GM12878 (cell line): ENCODE measurements at regions of chr1 and their contacts with region 1.

Region 1: GRCh38 chr1:92960395-92961130 is 699 bp downstream of the DIPK1A start:
- DNase-seq: peak; percentile 72
- ATAC-seq: peak; percentile 66
- H3K4me3 ChIP-seq: peak overlapping the region; percentile 97
- H3K27ac ChIP-seq: peak overlapping the region; percentile 91
- H3K4me1 ChIP-seq: peaks cover 40% of the 10 kb centered on the region
- H3K27me3 ChIP-seq: no peaks in the 10 kb centered on the region
- CTCF ChIP-seq: peak; percentile 65 to 91 (median 79)
- EP300 ChIP-seq: no peak
- POLR2A ChIP-seq: no peak
- RAD21 ChIP-seq: peak; percentile 94

Region 2: GRCh38 chr1:92619466-92620189 is 340.9 kb before region 1 on chr1:
- CTCF ChIA-PET with region 1: no interaction called
- POLR2A ChIA-PET with region 1: no interaction called
- RAD21 ChIA-PET with region 1: no interaction called
- SMC1A ChIA-PET with region 1: no interaction called
- in situ Hi-C with region 1: no loop called
- intact Hi-C with region 1: no loop called
- DNase-seq: no peak
- ATAC-seq: no peak
- H3K4me3 ChIP-seq: no peak overlapping the region
- H3K27ac ChIP-seq: no peak overlapping the region
- H3K4me1 ChIP-seq: no peaks in the 10 kb centered on the region
- H3K27me3 ChIP-seq: no peaks in the 10 kb centered on the region
- CTCF ChIP-seq: no peak
- EP300 ChIP-seq: no peak
- POLR2A ChIP-seq: no peak
- RAD21 ChIP-seq: no peak

Region 3: GRCh38 chr1:92736395-92736794 is 224.2 kb before region 1 on chr1:
- CTCF ChIA-PET with region 1: no interaction called
- POLR2A ChIA-PET with region 1: no interaction called
- RAD21 ChIA-PET with region 1: no interaction called
- SMC1A ChIA-PET with region 1: no interaction called
- in situ Hi-C with region 1: no loop called
- intact Hi-C with region 1: no loop called
- DNase-seq: no peak
- ATAC-seq: peak; percentile 89
- H3K4me3 ChIP-seq: no peak overlapping the region
- H3K27ac ChIP-seq: no peak overlapping the region
- H3K4me1 ChIP-seq: no peaks in the 10 kb centered on the region
- H3K27me3 ChIP-seq: no peaks in the 10 kb centered on the region
- CTCF ChIP-seq: peak in 2 of 3 experiments; percentile 8 to 16; a peak in 2 of 6 replicates
- EP300 ChIP-seq: no peak
- POLR2A ChIP-seq: no peak
- RAD21 ChIP-seq: peak; percentile 18; the same call in 1 of the 2 replicates

Region 4: GRCh38 chr1:92851729-92852128 is 108.8 kb before region 1 on chr1:
- CTCF ChIA-PET with region 1: interaction called, 44 read pairs
- POLR2A ChIA-PET with region 1: interaction called, 4 read pairs
- RAD21 ChIA-PET with region 1: interaction called, 8 read pairs
- SMC1A ChIA-PET with region 1: interaction called, 179 read pairs
- in situ Hi-C with region 1: no loop called
- intact Hi-C with region 1: no loop called
- DNase-seq: no peak
- ATAC-seq: no peak
- H3K4me3 ChIP-seq: no peak overlapping the region
- H3K27ac ChIP-seq: no peak overlapping the region
- H3K4me1 ChIP-seq: peaks cover 6% of the 10 kb centered on the region
- H3K27me3 ChIP-seq: no peaks in the 10 kb centered on the region
- CTCF ChIP-seq: no peak
- EP300 ChIP-seq: no peak
- POLR2A ChIP-seq: no peak
- RAD21 ChIP-seq: no peak

Region 5: GRCh38 chr1:92901699-92902405 is 58.7 kb before region 1 on chr1:
- CTCF ChIA-PET with region 1: interaction called, 3 read pairs
- POLR2A ChIA-PET with region 1: interaction called, 10 read pairs
- RAD21 ChIA-PET with region 1: interaction called, 5 read pairs
- SMC1A ChIA-PET with region 1: interaction called, 3 read pairs
- in situ Hi-C with region 1: no loop called
- intact Hi-C with region 1: no loop called
- DNase-seq: no peak
- ATAC-seq: no peak
- H3K4me3 ChIP-seq: no peak overlapping the region
- H3K27ac ChIP-seq: no peak overlapping the region
- H3K4me1 ChIP-seq: peaks cover 7% of the 10 kb centered on the region
- H3K27me3 ChIP-seq: no peaks in the 10 kb centered on the region
- CTCF ChIP-seq: no peak
- EP300 ChIP-seq: no peak
- POLR2A ChIP-seq: no peak
- RAD21 ChIP-seq: no peak

Region 6: GRCh38 chr1:92929461-92929860 is 31.1 kb before region 1 on chr1:
- CTCF ChIA-PET with region 1: interaction called, 16 read pairs
- POLR2A ChIA-PET with region 1: interaction called, 6 read pairs
- RAD21 ChIA-PET with region 1: interaction called, 9 read pairs
- SMC1A ChIA-PET with region 1: interaction called, 10 read pairs
- in situ Hi-C with region 1: no loop called
- intact Hi-C with region 1: no loop called
- DNase-seq: no peak
- ATAC-seq: peak; percentile 78
- H3K4me3 ChIP-seq: peak overlapping the region; percentile 35; the same call in 1 of the 2 replicates
- H3K27ac ChIP-seq: peak overlapping the region; percentile 50
- H3K4me1 ChIP-seq: peaks cover 47% of the 10 kb centered on the region
- H3K27me3 ChIP-seq: no peaks in the 10 kb centered on the region
- CTCF ChIP-seq: no peak
- EP300 ChIP-seq: no peak
- POLR2A ChIP-seq: no peak
- RAD21 ChIP-seq: no peak

Region 7: DNA sequence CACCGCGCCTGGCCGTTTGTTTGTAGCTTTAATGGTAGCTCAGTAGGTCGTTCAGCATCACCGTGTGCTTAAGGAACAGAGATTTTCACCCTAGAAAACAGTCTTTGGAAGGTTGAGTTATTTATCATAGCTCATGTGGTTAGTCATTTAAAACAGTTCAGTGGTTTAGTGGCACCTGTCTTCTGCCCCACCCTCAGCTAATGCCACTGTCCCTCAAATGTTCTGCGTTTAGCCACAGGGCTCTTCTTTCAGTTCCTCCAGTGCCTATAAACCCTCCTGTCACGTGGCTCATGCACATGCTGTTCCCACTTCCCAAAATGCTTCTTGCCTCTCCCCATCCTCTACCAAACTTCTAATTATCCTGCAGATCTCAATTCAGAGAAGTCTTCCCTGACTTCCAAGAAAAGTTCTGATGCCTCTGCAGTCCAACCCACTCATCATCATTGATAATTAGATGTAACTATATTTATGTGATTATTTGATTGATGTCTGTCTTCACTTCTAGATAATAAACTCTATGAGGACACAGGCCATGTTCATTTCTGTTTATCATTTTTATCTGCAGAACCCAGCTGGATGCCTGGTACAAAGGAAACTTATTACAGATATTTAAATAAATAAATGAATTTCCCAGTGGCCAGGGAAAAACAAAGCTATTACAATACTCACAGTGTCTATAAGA is 15.1 kb after region 1 on chr1:
- CTCF ChIA-PET with region 1: interaction called, 109 read pairs
- POLR2A ChIA-PET with region 1: interaction called, 103 read pairs
- RAD21 ChIA-PET with region 1: interaction called, 204 read pairs
- SMC1A ChIA-PET with region 1: interaction called, 163 read pairs
- in situ Hi-C with region 1: no loop called
- intact Hi-C with region 1: loop called (anchors 1 kb)
- DNase-seq: peak; percentile 97
- ATAC-seq: peak; percentile 76
- H3K4me3 ChIP-seq: 0 out of 2 replicates have a peak overlapping the region, but pooled peaks have one; percentile 58
- H3K27ac ChIP-seq: peak overlapping the region; percentile 89
- H3K4me1 ChIP-seq: peaks cover 50% of the 10 kb centered on the region
- H3K27me3 ChIP-seq: no peaks in the 10 kb centered on the region
- CTCF ChIP-seq: no peak
- EP300 ChIP-seq: peak; percentile 89 to 92
- POLR2A ChIP-seq: no peak
- RAD21 ChIP-seq: no peak

Region 8: DNA sequence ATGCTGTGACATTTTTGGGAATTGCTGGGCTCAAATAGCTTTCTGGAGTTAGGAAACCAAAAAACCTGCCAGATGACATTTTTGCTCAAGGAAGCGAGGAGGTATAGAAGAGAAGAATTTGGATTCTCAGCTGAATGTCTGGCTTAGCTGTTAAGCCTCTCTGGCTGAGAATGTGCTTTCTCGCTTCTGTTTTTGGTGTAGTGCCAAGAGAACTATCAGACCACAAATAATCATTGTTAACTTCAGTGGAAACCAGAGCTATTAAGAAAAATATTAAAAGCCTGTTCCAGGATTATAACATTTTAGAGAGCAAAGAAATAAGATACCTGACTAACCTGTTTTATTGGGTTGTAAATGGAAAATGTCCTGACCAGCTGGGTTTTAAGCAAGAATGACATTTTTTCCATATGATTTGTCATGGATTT is 40.2 kb after region 1 on chr1:
- CTCF ChIA-PET with region 1: interaction called, 6 read pairs
- POLR2A ChIA-PET with region 1: interaction called, 6 read pairs
- RAD21 ChIA-PET with region 1: interaction called, 14 read pairs
- SMC1A ChIA-PET with region 1: interaction called, 7 read pairs
- in situ Hi-C with region 1: no loop called
- intact Hi-C with region 1: no loop called
- DNase-seq: no peak
- ATAC-seq: peak; percentile 71
- H3K4me3 ChIP-seq: no peak overlapping the region
- H3K27ac ChIP-seq: no peak overlapping the region
- H3K4me1 ChIP-seq: peaks cover 6% of the 10 kb centered on the region
- H3K27me3 ChIP-seq: no peaks in the 10 kb centered on the region
- CTCF ChIP-seq: no peak
- EP300 ChIP-seq: no peak
- POLR2A ChIP-seq: no peak
- RAD21 ChIP-seq: no peak

Region 9: GRCh38 chr1:93078986-93079654 is 118.6 kb after region 1 on chr1 and contains the start of gene MTF2:
- CTCF ChIA-PET with region 1: interaction called, 7 read pairs
- POLR2A ChIA-PET with region 1: interaction called, 8 read pairs
- RAD21 ChIA-PET with region 1: interaction called, 5 read pairs
- SMC1A ChIA-PET with region 1: interaction called, 4 read pairs
- in situ Hi-C with region 1: no loop called
- intact Hi-C with region 1: loop called (anchors 5 kb)
- DNase-seq: peak; percentile 84
- ATAC-seq: peak; percentile 84
- H3K4me3 ChIP-seq: peak within 1 kb of the TSS; percentile 96
- H3K27ac ChIP-seq: peak within 1 kb of the TSS; percentile 93
- H3K4me1 ChIP-seq: no peaks in the 10 kb centered on the region
- H3K27me3 ChIP-seq: no peaks in the 10 kb centered on the region
- CTCF ChIP-seq: 0 out of 6 replicates have a peak, but pooled peaks of 1 of the 3 experiments have one; percentile 1
- EP300 ChIP-seq: peak; percentile 42 to 48; a peak in 3 of 4 replicates
- POLR2A ChIP-seq: peak; percentile 97
- RAD21 ChIP-seq: no peak
- polyA plus RNA-seq, gene MTF2: 22.6 to 30.6 TPM